Astrocyte of the cerebellum (primary cell): ENCODE measurements at regions of chr6 and their contacts with region 1.

Region 1: DNA sequence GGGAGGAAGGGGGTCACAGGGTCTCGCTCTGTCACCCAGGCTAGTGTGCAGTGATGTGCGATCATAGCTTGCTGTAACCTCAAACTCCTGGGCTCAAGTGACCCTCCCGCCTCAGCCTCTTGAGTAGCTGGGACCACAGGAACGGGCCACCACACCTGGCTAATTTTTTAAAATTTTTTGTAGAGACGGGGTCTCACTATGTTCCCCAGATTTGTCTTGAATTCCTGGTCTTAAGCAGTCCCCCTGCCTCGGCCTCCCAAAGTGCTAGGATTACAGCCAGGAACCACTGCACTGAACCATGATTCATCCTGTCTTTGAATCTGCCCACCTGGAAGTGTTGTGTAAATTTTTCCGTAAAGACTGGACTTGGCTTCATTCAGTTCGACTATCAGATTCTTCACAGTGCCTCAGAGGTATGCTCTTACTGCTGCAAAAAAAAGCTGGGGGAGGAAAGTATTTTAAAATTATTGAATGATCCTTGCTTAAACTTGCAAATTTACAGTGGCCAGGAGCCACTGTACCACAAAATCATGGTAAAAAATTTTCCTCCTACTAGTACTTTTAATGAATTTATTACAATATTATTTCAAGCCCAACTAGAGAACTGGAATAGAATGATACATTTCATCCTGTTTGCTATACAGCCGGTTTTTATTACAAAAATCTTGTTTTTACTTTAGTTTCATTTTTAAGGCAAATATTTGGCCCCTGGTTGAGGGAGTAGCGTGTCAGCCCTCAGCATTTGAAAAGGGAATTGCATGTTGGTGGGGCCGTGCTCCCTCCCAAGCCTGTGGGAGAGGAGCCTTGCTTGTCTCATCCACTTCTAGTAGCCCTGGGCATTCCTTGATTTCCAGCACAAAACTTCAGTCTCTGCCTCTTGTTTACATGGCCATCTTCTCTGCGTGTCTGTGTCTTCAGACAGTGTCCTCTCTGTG is 202.5 kb upstream of the SGK1 start:
- DNase-seq: peak; percentile 49
- H3K4me3 ChIP-seq: no peak overlapping the region
- CTCF ChIP-seq: no peak

Region 2: GRCh38 chr6:134464690-134465411 is 55.6 kb before region 1 on chr6:
- in situ Hi-C with region 1: loop called (anchors 5 kb)
- DNase-seq: peak; percentile 91
- H3K4me3 ChIP-seq: no peak overlapping the region
- CTCF ChIP-seq: no peak